ENCODE measurements at regions of chr20 and their contacts with region 1.

Region 1: DNA sequence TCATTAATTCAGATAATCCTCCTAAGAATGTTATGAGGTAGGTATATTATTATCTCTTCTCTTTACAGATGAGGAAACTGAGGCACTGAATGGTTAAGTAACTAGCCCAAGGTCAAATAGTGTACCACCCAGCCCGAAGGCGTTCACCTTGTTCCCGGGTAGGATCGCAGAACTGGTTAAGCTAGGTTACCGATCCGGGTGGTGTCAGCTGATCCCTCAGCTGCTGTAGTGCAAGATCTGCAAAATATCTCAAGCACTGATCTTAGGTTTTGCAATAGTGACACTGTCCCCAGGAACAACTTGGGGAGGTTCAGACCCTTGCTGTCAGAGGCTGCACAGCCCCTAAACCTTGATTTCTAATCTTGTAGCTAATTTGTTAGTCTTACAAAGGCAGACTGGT is 28.2 kb downstream of the SLC52A3 start:
- DNase-seq: no peak
- H3K4me3 ChIP-seq: no peak overlapping the region
- H3K27ac ChIP-seq: no peak overlapping the region
- H3K4me1 ChIP-seq: no peaks in the 10 kb centered on the region
- H3K27me3 ChIP-seq: peaks cover 0 to 2% of the 10 kb centered on the region in 2 experiments
- CTCF ChIP-seq: no peak
- POLR2A ChIP-seq: no peak

Region 2: DNA sequence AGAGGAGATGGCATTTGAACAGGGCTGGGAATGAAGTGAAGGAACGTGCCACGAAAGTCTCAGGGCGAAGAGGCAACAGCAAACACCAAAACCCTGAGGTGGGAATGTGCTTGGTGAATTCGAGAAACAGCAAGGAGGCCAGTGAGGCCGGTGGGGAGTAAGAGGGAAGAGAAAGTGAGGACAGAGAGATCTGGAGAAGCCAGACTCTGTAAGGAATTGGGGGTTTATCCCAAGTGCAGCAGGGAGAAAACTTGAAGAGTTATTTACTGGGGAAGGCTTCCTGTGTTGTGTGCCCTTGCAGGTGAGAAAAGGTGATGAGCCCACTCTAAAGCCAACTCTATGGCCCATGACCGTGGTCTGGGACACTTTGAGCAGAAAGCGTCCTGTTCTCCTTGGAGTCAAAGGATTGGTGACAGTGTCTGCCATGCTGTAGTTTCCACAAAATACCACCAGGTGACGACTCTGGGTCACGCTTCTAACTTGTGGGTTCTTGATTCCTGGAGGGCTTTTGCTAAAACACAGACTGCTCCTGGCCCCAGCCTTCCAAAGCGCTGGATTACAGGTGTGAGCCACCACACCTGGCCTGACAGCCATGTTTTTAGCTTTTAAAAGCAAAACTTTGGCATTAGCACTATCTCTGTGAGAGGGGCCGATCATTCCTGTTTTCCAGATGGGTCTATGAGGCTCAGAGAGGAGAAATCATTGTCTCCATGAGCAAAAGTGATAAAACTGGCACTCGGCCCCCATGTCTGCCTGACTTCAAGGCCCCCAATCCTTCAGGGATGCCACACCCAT is 178.5 kb before region 1 on chr20:
- CTCF ChIA-PET with region 1: interaction called, 34 read pairs
- POLR2A ChIA-PET with region 1: no interaction called
- dilution Hi-C with region 1: no loop called
- intact Hi-C with region 1: loop called (anchors 1 kb)
- DNase-seq: peak; percentile 79
- H3K4me3 ChIP-seq: no peak overlapping the region
- H3K27ac ChIP-seq: no peak overlapping the region
- H3K4me1 ChIP-seq: no peaks in the 10 kb centered on the region
- H3K27me3 ChIP-seq: peaks cover 0 to 9% of the 10 kb centered on the region in 2 experiments
- CTCF ChIP-seq: peak; percentile 95
- POLR2A ChIP-seq: no peak

Region 3: GRCh38 chr20:571754-572441 is 168.2 kb before region 1 on chr20:
- CTCF ChIA-PET with region 1: interaction called, 13 read pairs
- POLR2A ChIA-PET with region 1: no interaction called
- dilution Hi-C with region 1: no loop called
- intact Hi-C with region 1: no loop called
- DNase-seq: no peak
- H3K4me3 ChIP-seq: no peak overlapping the region
- H3K27ac ChIP-seq: peak overlapping the region; percentile 11
- H3K4me1 ChIP-seq: peaks cover 45% of the 10 kb centered on the region
- H3K27me3 ChIP-seq: peaks cover 0 to 5% of the 10 kb centered on the region in 2 experiments
- CTCF ChIP-seq: no peak
- POLR2A ChIP-seq: no peak

Region 4: DNA sequence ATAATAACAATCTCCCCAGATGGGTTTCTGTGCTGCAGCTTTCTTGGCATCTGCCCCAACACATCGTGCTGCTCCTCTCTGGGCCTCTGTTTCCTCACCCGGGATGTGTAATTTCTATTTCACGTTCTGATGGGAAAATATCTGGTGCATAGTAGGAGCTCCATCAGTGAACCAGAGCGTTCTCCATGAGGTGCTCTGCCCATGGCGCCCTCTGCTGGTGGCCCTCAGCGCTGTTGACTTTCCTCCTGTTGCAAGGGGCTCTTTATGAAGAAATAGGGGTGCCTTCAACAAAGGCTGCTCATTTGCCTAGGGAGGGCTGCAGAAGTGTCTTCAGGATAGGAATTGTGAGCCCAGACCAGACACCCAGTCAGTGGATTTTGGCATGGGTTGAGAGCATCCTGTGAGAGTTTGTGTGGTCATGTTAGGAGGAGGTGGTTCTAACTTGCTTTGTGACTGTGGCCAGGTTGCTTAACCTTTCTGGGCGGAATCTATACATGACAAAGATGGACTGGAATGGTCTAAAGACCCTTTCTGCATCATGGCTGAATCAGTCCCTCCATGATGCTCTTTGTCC is 72.7 kb before region 1 on chr20:
- CTCF ChIA-PET with region 1: interaction called, 18 read pairs
- POLR2A ChIA-PET with region 1: no interaction called
- dilution Hi-C with region 1: no loop called
- intact Hi-C with region 1: loop called (anchors 5 kb)
- DNase-seq: peak; percentile 46
- H3K4me3 ChIP-seq: no peak overlapping the region
- H3K27ac ChIP-seq: no peak overlapping the region
- H3K4me1 ChIP-seq: no peaks in the 10 kb centered on the region
- H3K27me3 ChIP-seq: peaks cover 38 to 48% of the 10 kb centered on the region in 2 experiments
- CTCF ChIP-seq: peak; percentile 91 to 92
- POLR2A ChIP-seq: no peak

Region 5: GRCh38 chr20:688809-689212 is 51.3 kb before region 1 on chr20:
- CTCF ChIA-PET with region 1: no interaction called
- POLR2A ChIA-PET with region 1: no interaction called
- dilution Hi-C with region 1: no loop called
- intact Hi-C with region 1: no loop called
- DNase-seq: no peak
- H3K4me3 ChIP-seq: no peak overlapping the region
- H3K27ac ChIP-seq: no peak overlapping the region
- H3K4me1 ChIP-seq: no peaks in the 10 kb centered on the region
- H3K27me3 ChIP-seq: peaks cover 2 to 10% of the 10 kb centered on the region in 2 experiments
- CTCF ChIP-seq: no peak
- POLR2A ChIP-seq: no peak

Region 6: DNA sequence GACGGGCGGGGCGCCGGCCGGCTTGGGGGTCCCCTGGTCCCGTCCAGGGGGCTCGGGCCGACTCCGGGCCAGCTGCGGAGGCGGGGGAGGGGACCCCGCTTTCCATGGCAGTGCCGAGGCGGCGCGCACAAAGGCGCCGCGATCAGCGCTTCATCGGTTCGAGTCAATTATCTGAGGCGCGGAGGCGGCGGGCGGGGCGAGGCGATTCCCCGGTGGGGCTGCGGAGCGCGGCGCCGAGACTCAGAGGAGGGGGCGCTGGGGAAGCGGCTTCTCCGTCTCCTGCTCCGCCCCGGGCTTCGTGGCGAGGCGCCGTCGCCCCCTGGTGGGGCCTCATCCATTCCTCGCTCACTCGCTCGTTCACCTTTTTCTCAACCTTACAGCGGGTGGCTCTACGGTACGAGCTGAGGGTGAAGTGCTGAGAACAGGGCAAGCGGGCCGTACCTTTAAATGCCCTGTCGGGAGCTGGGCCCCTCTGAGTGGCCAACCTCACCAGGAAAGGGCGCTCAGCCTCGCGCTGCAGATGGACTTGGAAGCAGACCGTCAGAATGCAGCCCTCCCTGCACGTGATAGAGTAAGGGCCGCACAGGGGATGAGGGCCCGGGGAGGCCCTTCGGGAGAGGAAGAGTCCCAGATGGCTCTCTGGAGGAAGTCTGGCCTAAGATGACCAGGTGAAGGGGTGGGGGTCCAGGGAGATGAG is 11.7 kb before region 1 on chr20:
- CTCF ChIA-PET with region 1: interaction called, 21 read pairs
- POLR2A ChIA-PET with region 1: no interaction called
- dilution Hi-C with region 1: no loop called
- intact Hi-C with region 1: no loop called
- DNase-seq: peak; percentile 48
- H3K4me3 ChIP-seq: peak overlapping the region in 1 of 3 experiments; percentile 24
- H3K27ac ChIP-seq: no peak overlapping the region
- H3K4me1 ChIP-seq: no peaks in the 10 kb centered on the region
- H3K27me3 ChIP-seq: peaks cover 25 to 29% of the 10 kb centered on the region in 2 experiments
- CTCF ChIP-seq: peak; percentile 46 to 85
- POLR2A ChIP-seq: no peak

Region 7: DNA sequence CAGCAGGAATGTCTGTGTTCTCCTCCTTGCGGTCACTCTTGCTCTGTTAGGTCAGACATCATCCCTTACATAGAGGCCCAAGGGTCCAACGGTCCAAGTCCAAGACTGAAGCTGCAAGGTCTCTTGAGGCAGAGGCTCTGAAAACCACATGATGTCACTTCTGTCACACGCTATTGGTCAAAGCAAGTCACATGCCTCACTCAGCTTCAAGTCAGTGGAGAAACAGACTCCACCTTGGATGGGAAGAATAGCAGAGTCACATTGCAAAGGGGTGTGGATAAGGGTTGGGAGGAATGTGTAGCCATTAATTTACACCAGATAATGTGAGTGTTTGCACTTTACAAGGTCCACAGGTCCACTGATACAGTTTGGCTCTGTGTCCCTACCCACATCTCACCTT is 10.7 kb after region 1 on chr20:
- CTCF ChIA-PET with region 1: interaction called, 20 read pairs
- POLR2A ChIA-PET with region 1: no interaction called
- dilution Hi-C with region 1: no loop called
- intact Hi-C with region 1: no loop called
- DNase-seq: no peak
- H3K4me3 ChIP-seq: no peak overlapping the region
- H3K27ac ChIP-seq: no peak overlapping the region
- H3K4me1 ChIP-seq: no peaks in the 10 kb centered on the region
- H3K27me3 ChIP-seq: peaks cover 0 to 2% of the 10 kb centered on the region in 2 experiments
- CTCF ChIP-seq: no peak
- POLR2A ChIP-seq: no peak

Measured in endothelial cell of umbilical vein (primary cell).